ENCODE measurements at regions of chr3 and their contacts with region 1.

Region 1: DNA sequence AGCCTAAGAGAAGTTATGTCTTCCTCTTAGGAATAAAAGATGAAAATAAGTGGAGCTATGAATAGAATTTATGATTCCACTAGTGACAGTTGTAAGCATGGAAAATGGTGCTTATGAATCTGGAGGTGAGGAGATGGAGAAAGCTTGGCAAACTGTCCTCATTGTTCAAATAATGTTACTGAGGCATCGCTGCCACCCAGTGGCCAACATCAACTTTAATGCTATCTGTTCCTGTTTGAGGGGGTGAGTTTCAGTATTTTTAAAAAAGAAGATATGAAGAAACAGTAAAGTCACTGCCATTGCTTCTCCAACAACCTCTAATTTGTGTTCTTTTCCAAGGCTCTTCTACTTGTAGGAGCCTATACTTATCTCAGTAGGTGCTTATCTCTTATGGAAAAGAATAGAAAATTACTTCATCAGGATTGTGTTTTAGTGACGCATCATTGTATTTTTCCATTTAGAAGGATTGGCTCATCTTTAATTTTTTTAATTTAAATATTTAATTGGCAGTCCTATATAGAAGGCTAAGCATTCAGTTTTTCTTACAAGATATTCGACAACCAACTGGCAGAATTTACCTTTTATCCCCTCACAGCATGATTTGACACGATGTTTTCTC is 260.4 kb upstream of the P2RY1 start:
- DNase-seq: no peak
- H3K4me3 ChIP-seq: no peak overlapping the region
- H3K27ac ChIP-seq: no peak overlapping the region
- H3K27me3 ChIP-seq: no peaks in the 10 kb centered on the region
- CTCF ChIP-seq: peak; percentile 56

Region 2: GRCh38 chr3:152436707-152437590 is 137.6 kb before region 1 on chr3:
- CTCF ChIA-PET with region 1: no interaction called
- POLR2A ChIA-PET with region 1: no interaction called
- DNase-seq: no peak
- H3K4me3 ChIP-seq: no peak overlapping the region
- H3K27ac ChIP-seq: no peak overlapping the region
- H3K27me3 ChIP-seq: no peaks in the 10 kb centered on the region
- CTCF ChIP-seq: no peak

Region 3: GRCh38 chr3:152595975-152596790 is 21.6 kb after region 1 on chr3:
- CTCF ChIA-PET with region 1: interaction called, 10 read pairs
- POLR2A ChIA-PET with region 1: no interaction called
- DNase-seq: peak; percentile 34
- H3K4me3 ChIP-seq: no peak overlapping the region; the same call in 1 of the 2 replicates
- H3K27ac ChIP-seq: no peak overlapping the region
- H3K27me3 ChIP-seq: no peaks in the 10 kb centered on the region
- CTCF ChIP-seq: no peak

Region 4: DNA sequence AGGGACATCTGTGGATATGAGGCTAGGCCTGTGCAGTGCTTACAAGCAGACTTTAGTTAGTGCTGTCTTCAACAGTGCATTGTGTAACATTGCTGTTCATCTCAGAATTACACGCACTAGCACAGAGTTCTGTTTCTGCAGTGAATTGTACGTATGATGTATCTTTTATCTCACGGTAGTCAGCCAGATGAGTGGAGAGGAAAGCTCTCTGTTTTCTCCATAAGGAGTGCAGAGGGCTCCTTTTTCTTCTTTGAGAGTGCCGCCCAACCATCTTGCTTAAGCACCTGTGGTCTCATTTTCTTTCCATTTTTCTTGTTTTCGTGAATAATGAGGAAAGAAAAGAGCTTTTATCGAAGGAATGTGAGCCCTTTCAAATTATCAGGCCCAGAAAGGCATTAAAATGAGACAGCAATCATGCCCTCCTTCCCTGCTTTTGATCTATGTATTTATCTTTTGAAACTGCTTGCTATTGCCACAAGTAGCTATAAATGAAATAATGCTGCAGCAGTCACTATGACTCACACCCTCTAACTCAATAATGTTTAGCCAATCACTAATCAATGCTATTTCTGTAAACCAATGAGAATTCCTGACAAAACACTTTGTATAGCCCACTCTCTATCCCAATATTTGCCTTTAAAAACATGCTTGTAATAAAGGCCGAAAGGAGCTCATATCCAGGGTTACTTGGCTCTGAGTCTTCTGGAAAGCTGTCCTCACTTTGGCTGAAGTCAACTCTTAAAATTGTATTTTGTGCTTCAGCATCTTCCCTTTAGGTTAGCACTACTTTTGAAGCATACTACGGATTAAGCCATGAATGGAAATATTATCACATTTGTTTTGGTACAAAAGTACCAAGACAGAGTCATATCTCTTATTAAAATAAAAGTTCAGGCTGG is 34.4 kb after region 1 on chr3:
- CTCF ChIA-PET with region 1: no interaction called
- POLR2A ChIA-PET with region 1: no interaction called
- DNase-seq: no peak
- H3K4me3 ChIP-seq: no peak overlapping the region
- H3K27ac ChIP-seq: no peak overlapping the region
- H3K27me3 ChIP-seq: no peaks in the 10 kb centered on the region
- CTCF ChIP-seq: no peak

Measured in AG04450 (cell line).